ENCODE measurements at regions of chr10 and their contacts with region 1.

Region 1: GRCh38 chr10:97572214-97572989 is at the start of gene ANKRD2:
- DNase-seq: peak; percentile 67
- H3K4me3 ChIP-seq: peak within 1 kb of the TSS in 2 of 3 experiments; percentile 5 to 12
- H3K27ac ChIP-seq: peak within 1 kb of the TSS; percentile 80
- H3K4me1 ChIP-seq: peaks cover 53% of the 10 kb centered on the region
- H3K27me3 ChIP-seq: no peaks in the 10 kb centered on the region
- CTCF ChIP-seq: peak; percentile 94 to 97
- total RNA-seq, gene ANKRD2: 0.47 to 0.83 TPM

Region 2: DNA sequence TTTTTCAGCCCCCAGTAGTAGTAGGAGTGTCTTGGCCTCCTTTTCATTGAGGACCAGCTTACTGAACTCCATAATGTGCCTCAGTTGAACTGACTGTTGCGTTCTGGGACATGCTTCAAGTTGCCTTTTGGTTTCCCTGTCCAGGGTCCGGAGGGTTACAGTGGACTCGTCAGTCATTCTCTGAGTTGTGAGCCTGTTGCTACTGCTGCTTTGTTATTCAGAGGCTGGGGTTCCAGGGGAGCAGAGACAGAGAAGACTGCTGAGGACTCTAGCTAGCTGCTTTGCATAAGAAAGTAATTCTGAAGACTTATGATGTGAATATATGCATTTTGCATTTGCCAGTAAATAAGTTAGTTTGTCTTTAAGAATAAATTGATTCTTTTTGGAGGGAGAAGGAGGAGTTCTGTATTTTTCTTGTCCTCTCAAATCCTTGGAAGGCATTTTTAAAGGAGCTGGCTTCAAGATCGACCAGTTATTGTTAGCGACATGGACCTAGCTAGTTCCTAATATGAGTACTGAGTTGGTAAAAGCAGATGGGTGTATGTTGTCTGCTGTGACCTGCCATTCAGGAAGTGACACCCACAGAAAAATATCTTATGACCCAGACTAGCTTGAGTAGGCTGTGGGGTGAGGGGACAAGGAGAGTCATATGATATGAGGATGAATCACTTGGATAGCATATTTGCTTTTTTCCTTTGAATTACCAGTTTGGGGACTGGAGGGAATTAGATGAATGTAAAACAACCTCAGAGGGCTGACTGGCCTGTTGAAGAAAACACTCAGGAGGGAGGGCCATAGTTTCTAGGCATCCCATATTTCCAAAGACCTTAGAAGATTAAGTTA is 76.4 kb after region 1 on chr10:
- CTCF ChIA-PET with region 1: no interaction called
- dilution Hi-C with region 1: no loop called
- in situ Hi-C with region 1: no loop called
- intact Hi-C with region 1: loop called (anchors 1 kb)
- DNase-seq: peak; percentile 92
- H3K4me3 ChIP-seq: no peak overlapping the region
- H3K27ac ChIP-seq: peak overlapping the region; percentile 85
- H3K4me1 ChIP-seq: peaks cover 61% of the 10 kb centered on the region
- H3K27me3 ChIP-seq: no peaks in the 10 kb centered on the region
- CTCF ChIP-seq: no peak

Measured in mammary epithelial cell (primary cell).